ENCODE measurements at regions of chrX and their contacts with region 1.

Region 1: GRCh38 chrX:85544609-85545008 is 165.1 kb upstream of the POF1B start:
- DNase-seq: no peak
- H3K4me3 ChIP-seq: no peak overlapping the region
- H3K27ac ChIP-seq: no peak overlapping the region
- H3K4me1 ChIP-seq: no peaks in the 10 kb centered on the region
- H3K27me3 ChIP-seq: no peaks in the 10 kb centered on the region
- CTCF ChIP-seq: peak in 1 of 3 experiments; percentile 17
- POLR2A ChIP-seq: no peak

Region 2: DNA sequence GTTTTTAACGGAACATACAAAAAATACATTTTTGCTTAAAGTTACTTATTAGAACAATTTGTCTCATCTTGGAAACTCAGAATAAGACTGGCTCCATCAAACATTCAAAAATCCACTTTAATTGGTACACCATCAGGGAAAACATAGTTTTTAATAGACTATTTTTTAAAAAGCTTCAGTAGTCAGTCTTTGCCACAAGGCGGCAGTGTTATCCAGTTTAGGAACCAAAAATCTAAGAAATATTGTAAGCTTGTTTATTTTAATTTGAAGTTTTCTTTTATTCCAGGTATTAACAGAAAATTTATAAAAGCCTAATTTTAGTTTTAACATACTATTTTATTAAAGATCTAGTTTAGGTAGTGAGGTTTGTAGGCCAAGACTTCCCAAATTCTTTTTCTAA is 433.3 kb before region 1 on chrX:
- intact Hi-C with region 1: loop called (anchors 10 kb)
- DNase-seq: peak; percentile 15
- H3K4me3 ChIP-seq: no peak overlapping the region
- H3K27ac ChIP-seq: no peak overlapping the region
- H3K4me1 ChIP-seq: no peaks in the 10 kb centered on the region
- H3K27me3 ChIP-seq: no peaks in the 10 kb centered on the region
- CTCF ChIP-seq: peak; percentile 33 to 63 (median 43)
- POLR2A ChIP-seq: no peak

Region 3: GRCh38 chrX:85419293-85419692 is 125.3 kb before region 1 on chrX:
- intact Hi-C with region 1: no loop called
- DNase-seq: no peak
- H3K4me3 ChIP-seq: no peak overlapping the region
- H3K27ac ChIP-seq: no peak overlapping the region
- H3K4me1 ChIP-seq: no peaks in the 10 kb centered on the region
- H3K27me3 ChIP-seq: no peaks in the 10 kb centered on the region
- CTCF ChIP-seq: no peak
- POLR2A ChIP-seq: no peak

Region 4: GRCh38 chrX:85611926-85612325 is 67.3 kb after region 1 on chrX:
- intact Hi-C with region 1: no loop called
- DNase-seq: no peak
- H3K4me3 ChIP-seq: no peak overlapping the region
- H3K27ac ChIP-seq: no peak overlapping the region
- H3K4me1 ChIP-seq: no peaks in the 10 kb centered on the region
- H3K27me3 ChIP-seq: no peaks in the 10 kb centered on the region
- CTCF ChIP-seq: no peak
- POLR2A ChIP-seq: no peak